GM18951 (cell line): ENCODE measurements at regions of chr10 and their contacts with region 1.

Region 1: GRCh38 chr10:84537447-84537931 is 209.1 kb downstream of the CCSER2 start:
- POLR2A ChIP-seq: no peak

Region 2: GRCh38 chr10:84375011-84375410 is 162.5 kb before region 1 on chr10:
- in situ Hi-C with region 1: loop called (anchors 10 kb)
- POLR2A ChIP-seq: no peak